ENCODE measurements at regions of chr17 and their contacts with region 1.

Region 1: GRCh38 chr17:1716076-1716995 is 6.2 kb upstream of the TLCD2 start:
- DNase-seq: peak; percentile 100
- ATAC-seq: peak; percentile 55 to 76
- H3K4me3 ChIP-seq: peak overlapping the region; percentile 87
- H3K27ac ChIP-seq: peak overlapping the region; percentile 95 to 100
- H3K4me1 ChIP-seq: peaks cover 48% of the 10 kb centered on the region
- CTCF ChIP-seq: 0 out of 3 replicates have a peak, but pooled peaks have one; percentile 5
- EP300 ChIP-seq: no peak
- POLR2A ChIP-seq: peak; percentile 97
- RAD21 ChIP-seq: no peak

Region 2: DNA sequence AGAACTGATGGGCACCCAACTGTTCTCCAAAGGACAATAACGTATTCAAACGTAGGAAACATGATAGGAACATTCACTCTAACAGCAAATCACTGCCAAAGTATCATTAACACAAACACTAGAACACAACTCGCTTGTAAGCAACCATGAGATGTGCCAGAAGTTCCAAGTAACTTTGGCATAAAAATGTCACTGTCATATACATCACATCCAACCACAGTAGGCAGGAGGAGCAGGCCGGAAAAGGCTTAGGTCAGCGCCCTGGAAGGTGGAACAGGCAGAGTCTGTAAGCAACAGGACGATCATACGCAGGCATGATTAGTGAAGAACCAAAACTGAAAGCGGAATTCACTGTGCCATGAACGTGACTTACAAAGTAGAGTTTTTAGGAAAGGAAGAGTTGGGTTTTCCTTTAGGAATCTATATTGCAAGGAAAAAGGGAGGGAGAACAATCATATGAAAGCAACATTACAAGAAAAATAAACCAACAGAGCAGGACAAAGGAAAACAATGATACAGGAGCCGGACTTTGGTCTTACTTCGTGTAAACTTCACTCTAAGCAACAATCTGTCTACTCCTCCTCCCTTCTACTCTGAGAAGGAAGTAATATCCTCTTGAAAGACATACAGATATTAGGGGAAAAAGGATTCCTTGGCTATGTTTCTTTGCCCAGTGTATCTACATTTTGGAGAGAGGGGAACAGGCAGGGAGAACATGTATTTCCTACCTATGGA is 368.6 kb before region 1 on chr17:
- CTCF ChIA-PET with region 1: no interaction called
- POLR2A ChIA-PET with region 1: no interaction called
- DNase-seq: no peak
- ATAC-seq: peak; percentile 62 to 64
- H3K4me3 ChIP-seq: no peak overlapping the region
- H3K27ac ChIP-seq: no peak overlapping the region
- H3K4me1 ChIP-seq: peaks cover 18% of the 10 kb centered on the region
- CTCF ChIP-seq: no peak
- EP300 ChIP-seq: no peak
- POLR2A ChIP-seq: no peak
- RAD21 ChIP-seq: no peak

Region 3: DNA sequence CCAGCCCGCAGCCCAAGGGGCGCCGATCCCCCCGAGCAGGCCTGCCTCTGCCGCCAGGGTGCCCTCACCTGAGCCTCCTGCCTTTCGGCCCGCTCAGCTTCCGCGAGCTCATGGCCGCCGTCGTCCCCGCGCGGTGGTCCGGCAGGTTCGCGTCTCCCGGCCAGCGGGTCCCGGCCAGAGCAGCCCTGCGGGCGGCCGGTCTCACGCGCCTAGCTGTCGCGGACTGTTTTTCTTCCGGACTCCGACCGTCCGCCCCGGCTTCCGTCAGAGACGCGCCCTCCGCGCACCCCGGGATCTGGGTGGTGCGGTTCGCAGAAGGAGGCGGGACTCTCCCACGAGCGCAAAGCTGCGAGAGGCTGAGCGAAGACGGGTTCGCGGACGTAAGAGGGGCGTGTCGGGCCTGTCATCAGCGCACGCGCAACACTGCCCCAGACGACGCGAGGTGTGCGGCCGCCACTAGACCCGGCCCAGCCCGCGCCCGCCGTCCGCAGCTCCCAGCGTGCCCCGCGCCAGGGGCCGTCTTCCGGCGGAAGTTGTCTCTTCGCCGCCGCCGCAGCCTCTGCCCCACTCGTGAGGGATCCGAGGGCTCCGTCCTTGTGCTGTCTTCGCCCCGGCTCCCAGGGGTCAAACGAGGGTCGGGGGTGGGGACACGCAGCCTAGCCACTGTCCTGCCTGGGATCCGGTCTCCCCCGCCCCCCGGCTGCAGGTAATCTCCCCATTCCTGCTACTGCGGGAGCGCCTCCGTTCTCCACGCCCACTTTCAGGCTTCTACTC is 199.8 kb before region 1 on chr17 and contains the start of gene INPP5K:
- CTCF ChIA-PET with region 1: no interaction called
- POLR2A ChIA-PET with region 1: interaction called, 10 read pairs
- DNase-seq: peak; percentile 99
- ATAC-seq: peak; percentile 90 to 95
- H3K4me3 ChIP-seq: peak within 1 kb of the TSS; percentile 76
- H3K27ac ChIP-seq: peak within 1 kb of the TSS; percentile 95
- H3K4me1 ChIP-seq: peaks cover 12% of the 10 kb centered on the region; the same call in 2 of the 3 replicates
- CTCF ChIP-seq: no peak
- EP300 ChIP-seq: no peak
- POLR2A ChIP-seq: peak; percentile 91
- RAD21 ChIP-seq: no peak; a peak in 1 of 5 replicates
- polyA plus RNA-seq, gene INPP5K: 30.8 and 41.8 TPM in 2 replicates

Region 4: DNA sequence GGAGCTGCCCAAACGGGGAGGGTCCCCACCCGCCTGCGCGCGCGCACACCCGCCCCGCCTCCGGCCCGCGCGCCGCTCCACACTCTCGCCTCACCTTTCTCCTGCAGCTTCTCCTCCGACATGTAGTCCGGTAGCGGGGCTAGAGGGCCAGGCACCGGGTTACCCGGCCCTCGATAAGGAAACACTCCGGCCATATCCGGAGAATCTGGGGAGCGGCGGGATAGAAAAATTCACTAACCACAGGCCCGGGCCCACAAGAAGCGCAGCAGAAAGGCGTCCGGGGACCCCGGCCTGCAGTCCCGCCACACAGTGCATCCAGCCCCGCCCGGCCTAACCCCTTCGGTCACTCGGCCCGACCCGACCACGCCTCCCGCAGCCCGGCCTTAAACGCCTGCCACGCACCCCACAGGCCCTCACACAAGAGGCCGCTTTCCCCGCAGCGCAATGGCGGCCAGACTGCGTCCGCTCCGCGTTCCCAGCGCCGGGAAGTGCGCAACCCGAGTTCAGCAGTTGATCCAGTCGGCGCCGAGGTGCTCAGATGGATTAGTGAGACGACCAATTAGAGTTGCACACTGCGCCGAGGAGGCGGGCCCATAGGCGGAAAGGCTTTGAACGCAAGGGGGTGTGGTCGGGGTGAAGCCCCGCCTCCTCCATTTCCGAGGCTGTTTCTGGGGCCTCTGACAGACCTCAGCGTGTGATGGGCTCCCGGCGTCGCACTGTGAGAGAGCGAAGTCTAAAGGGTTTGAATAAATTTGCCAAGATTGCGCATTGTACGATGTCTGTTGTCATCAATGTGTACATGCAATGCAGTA is 31.8 kb before region 1 on chr17 and contains the start of gene PRPF8:
- CTCF ChIA-PET with region 1: interaction called, 10 read pairs
- POLR2A ChIA-PET with region 1: interaction called, 14 read pairs
- DNase-seq: peak; percentile 99
- ATAC-seq: peak; percentile 99
- H3K4me3 ChIP-seq: peak within 1 kb of the TSS; percentile 85
- H3K27ac ChIP-seq: peak within 1 kb of the TSS; percentile 95
- H3K4me1 ChIP-seq: peaks cover 7% of the 10 kb centered on the region
- CTCF ChIP-seq: no peak
- EP300 ChIP-seq: peak in 1 of 2 experiments; percentile 13; a peak in 1 of 5 replicates
- POLR2A ChIP-seq: peak; percentile 80
- RAD21 ChIP-seq: no peak
- polyA plus RNA-seq, gene PRPF8: 263 and 374 TPM in 2 replicates

Region 5: GRCh38 chr17:1746975-1747543 is 30.7 kb after region 1 on chr17:
- CTCF ChIA-PET with region 1: interaction called, 23 read pairs
- POLR2A ChIA-PET with region 1: interaction called, 10 read pairs
- DNase-seq: no peak
- ATAC-seq: no peak
- H3K4me3 ChIP-seq: no peak overlapping the region
- H3K27ac ChIP-seq: no peak overlapping the region
- H3K4me1 ChIP-seq: peaks cover 8% of the 10 kb centered on the region; the same call in 2 of the 3 replicates
- CTCF ChIP-seq: no peak
- EP300 ChIP-seq: no peak
- POLR2A ChIP-seq: no peak
- RAD21 ChIP-seq: no peak

Region 6: DNA sequence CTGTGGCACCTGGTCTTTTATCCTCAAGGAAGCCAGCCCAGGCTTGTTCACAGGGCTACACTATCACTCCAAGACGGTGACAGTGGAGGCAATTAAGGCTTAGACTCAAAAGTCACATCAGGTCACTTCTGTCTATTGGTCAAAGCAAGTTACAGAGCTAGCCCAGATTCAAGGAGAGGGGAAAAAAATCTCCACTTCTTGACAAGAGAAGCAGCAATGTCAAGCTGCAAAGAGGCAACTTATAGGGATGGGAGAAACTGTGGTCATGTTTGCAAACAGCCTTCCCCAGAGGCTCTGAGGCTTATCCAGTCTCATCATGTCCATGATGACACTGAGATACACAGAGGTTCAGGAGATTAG is 77.1 kb after region 1 on chr17:
- CTCF ChIA-PET with region 1: interaction called, 591 read pairs
- POLR2A ChIA-PET with region 1: no interaction called
- DNase-seq: no peak
- ATAC-seq: peak; percentile 47 to 62; a peak in 3 of 6 replicates
- H3K4me3 ChIP-seq: no peak overlapping the region
- H3K27ac ChIP-seq: no peak overlapping the region
- H3K4me1 ChIP-seq: peaks cover 15% of the 10 kb centered on the region
- CTCF ChIP-seq: no peak
- EP300 ChIP-seq: no peak
- POLR2A ChIP-seq: no peak
- RAD21 ChIP-seq: no peak

Region 7: DNA sequence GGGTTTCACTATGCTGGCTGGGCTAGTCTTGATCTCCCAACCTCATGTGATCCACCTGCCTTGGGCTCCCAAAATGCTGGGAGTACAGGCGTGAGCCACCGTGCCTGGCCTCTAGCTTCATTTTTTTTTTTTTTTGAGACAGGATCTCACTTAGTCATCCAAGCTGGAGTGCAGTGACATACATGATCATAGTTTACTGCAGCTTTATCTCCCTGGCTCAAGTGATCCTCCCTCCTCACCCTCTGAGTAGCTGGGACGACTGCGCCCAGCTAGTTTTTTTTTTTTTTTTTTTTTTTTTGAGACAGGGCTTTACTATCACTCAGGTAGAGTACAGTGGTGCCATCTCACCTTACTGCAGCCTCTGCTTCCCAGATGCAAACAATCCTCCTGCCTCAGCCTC is 123.2 kb after region 1 on chr17:
- CTCF ChIA-PET with region 1: interaction called, 10 read pairs
- POLR2A ChIA-PET with region 1: interaction called, 3 read pairs
- DNase-seq: no peak
- ATAC-seq: no peak
- H3K4me3 ChIP-seq: no peak overlapping the region
- H3K27ac ChIP-seq: no peak overlapping the region
- H3K4me1 ChIP-seq: no peaks in the 10 kb centered on the region
- CTCF ChIP-seq: no peak
- EP300 ChIP-seq: no peak
- POLR2A ChIP-seq: no peak
- RAD21 ChIP-seq: no peak